ENCODE measurements at regions of chr2 and their contacts with region 1.

Region 1: DNA sequence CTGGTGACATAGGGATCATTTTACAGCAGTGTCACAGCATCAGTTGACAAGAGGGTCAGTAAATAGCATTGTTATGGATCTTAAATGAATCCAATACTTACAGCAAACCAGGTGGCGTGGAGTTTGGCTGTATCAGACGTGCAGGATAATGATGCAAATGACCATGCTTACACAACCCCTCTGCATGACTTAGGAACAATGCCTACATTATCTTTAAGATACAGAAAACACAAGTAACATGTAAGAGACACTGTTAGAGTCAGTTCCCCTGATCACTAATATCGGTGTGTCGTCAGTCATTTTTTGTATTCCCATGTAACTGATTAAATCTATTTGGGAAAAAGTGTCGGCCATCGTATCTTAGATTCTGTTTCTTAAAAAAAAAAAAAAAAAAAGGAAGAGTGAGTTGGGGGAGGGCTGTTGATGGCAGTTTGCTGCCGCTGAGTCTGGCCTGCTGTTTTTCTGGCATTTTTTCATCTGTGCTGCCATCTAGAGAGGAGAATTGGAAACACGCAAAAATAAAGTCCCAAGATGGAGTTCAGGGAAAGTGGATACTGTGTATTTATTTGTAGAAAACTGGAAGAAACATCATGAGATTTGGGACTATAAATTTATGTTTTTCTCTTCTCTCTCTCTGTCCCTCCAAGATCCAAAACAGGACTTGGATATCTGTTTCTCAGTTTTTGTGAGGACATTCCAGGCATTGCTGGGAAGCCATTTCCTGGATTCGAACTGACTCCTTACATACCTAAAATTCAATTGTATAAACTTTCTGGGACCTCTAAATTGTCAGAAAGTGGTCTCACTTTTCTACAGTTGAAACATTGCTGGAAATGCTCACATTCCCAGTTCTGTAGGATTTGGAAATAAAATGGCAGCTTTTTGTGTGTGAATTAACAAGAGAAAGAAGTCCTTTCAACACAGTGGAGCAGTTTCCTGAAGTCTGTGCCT is 60.3 kb upstream of the AGPS start:
- DNase-seq: peak; percentile 47
- H3K4me3 ChIP-seq: no peak overlapping the region
- H3K27ac ChIP-seq: no peak overlapping the region
- H3K4me1 ChIP-seq: no peaks in the 10 kb centered on the region
- H3K27me3 ChIP-seq: no peaks in the 10 kb centered on the region
- CTCF ChIP-seq: peak; percentile 30 to 76 (median 66)
- POLR2A ChIP-seq: no peak

Region 2: DNA sequence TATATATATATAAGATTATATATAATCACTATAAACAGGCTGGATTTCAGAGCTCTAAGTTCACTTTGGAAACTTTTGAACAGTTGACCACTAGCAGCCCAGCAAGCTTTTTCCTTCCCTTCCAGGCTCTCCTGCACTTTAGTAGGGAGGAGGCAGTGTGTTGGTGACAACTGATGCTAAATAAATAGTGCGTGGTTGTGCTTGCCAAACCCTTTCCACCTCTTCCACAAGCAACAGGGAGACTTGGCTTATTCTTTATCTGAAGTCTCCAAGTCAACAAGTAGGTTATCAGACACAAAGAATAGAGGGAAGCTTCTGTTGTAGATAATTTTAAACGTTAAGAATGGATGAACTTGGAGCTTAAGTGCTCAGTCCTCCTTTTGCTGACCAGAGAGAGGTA is 527.9 kb before region 1 on chr2:
- intact Hi-C with region 1: no loop called
- DNase-seq: no peak
- H3K4me3 ChIP-seq: no peak overlapping the region
- H3K27ac ChIP-seq: no peak overlapping the region
- H3K4me1 ChIP-seq: no peaks in the 10 kb centered on the region
- H3K27me3 ChIP-seq: no peaks in the 10 kb centered on the region
- CTCF ChIP-seq: no peak
- POLR2A ChIP-seq: no peak

Region 3: DNA sequence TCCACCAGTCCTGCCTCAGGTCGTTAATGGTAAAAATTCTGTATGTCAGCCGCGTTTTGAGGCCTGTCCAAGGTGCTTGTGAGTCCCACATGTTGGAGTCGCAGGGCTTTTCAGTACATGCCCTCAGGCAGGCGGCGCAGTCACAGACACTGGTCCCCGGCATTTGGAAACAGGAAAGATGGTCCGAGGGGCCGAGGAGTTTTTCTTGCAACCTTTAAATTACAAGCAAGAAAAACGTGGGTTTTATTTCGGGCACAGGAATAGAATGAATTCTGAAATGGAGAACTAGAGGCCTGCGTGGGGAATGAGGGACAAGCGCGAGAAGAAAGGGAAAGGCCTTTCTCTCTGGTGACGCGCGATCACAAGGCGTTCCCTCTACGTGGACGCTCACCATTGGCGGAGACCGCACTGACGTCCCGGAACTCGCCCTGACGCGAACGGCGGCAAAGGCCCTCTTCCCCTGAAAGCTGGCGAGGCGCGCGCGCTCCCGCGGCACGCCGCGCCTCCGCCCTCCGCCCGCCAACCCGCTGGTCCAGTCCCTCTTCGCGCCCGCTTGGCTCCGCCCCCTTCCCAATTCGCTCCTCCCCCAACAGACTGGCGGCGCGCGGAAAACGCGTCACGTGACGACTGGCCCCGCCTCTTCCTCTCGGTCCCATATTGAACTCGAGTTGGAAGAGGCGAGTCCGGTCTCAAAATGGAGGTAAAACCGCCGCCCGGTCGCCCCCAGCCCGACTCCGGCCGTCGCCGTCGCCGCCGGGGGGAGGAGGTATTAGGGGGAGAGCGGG is 120.0 kb before region 1 on chr2 and contains the start of gene HNRNPA3:
- intact Hi-C with region 1: loop called (anchors 5 kb)
- DNase-seq: peak; percentile 99
- H3K4me3 ChIP-seq: peak within 1 kb of the TSS; percentile 78 to 85
- H3K27ac ChIP-seq: peak within 1 kb of the TSS; percentile 99
- H3K4me1 ChIP-seq: peaks cover 9% of the 10 kb centered on the region
- H3K27me3 ChIP-seq: no peaks in the 10 kb centered on the region
- CTCF ChIP-seq: peak in 3 of 4 experiments; percentile 27 to 44 (median 32)
- POLR2A ChIP-seq: peak; percentile 91
- total RNA-seq, gene HNRNPA3: 56.5 to 57.0 TPM

Region 4: DNA sequence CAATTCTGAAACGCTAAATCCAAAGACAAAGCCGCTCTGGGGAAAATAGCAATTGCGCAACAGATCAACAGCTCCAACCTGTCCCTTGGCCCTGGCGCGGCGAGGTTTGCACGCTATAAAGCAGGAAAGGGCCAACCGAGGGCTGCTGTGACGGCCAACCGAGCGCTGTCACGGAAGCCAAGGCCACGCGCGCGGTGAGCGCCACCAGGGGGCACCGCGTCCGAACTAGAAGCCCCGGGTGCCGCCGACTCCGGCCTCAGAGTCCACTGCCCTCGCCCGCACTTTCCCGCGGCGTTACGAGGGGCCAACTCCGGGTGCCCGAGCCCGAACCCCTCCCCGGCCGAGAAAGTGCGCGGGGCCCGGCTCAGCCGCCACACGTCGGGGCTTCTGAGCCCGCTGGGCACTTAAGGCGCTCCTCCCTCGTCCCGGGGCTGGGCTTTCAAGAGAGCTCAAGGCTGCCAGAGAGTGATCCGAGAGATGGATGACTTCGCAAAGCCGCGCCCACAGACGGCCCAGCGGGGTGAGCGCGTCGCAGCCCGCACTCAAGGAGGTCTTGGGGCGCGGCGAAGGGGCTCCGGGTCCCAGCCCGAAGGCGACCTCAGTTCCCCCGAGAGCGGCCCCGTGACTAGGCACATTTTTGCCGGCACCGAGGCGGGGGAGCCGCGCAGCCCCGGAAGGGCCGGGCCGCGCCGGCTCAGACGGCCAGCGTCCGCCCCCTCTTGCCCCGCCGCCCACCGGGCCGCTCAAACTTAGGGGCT is 68.7 kb before region 1 on chr2:
- intact Hi-C with region 1: loop called (anchors 2 kb)
- DNase-seq: peak; percentile 98
- H3K4me3 ChIP-seq: peak overlapping the region; percentile 95 to 99
- H3K27ac ChIP-seq: peak overlapping the region; percentile 99 to 100
- H3K4me1 ChIP-seq: no peaks in the 10 kb centered on the region
- H3K27me3 ChIP-seq: no peaks in the 10 kb centered on the region
- CTCF ChIP-seq: peak; percentile 64 to 96 (median 91)
- POLR2A ChIP-seq: peak; percentile 65

Region 5: GRCh38 chr2:177413703-177414102 is 81.4 kb after region 1 on chr2:
- intact Hi-C with region 1: loop called (anchors 5 kb)
- DNase-seq: no peak
- H3K4me3 ChIP-seq: no peak overlapping the region
- H3K27ac ChIP-seq: no peak overlapping the region
- H3K4me1 ChIP-seq: no peaks in the 10 kb centered on the region
- H3K27me3 ChIP-seq: no peaks in the 10 kb centered on the region
- CTCF ChIP-seq: no peak
- POLR2A ChIP-seq: no peak

Region 6: GRCh38 chr2:177604271-177605065 is 272.2 kb after region 1 on chr2:
- intact Hi-C with region 1: loop called (anchors 10 kb)
- DNase-seq: no peak
- H3K4me3 ChIP-seq: no peak overlapping the region
- H3K27ac ChIP-seq: no peak overlapping the region
- H3K4me1 ChIP-seq: no peaks in the 10 kb centered on the region
- H3K27me3 ChIP-seq: no peaks in the 10 kb centered on the region
- CTCF ChIP-seq: peak; percentile 15 to 57 (median 36)
- POLR2A ChIP-seq: no peak

Region 7: GRCh38 chr2:177724398-177725287 is 392.3 kb after region 1 on chr2:
- intact Hi-C with region 1: loop called (anchors 2 kb)
- DNase-seq: peak; percentile 9
- H3K4me3 ChIP-seq: no peak overlapping the region
- H3K27ac ChIP-seq: no peak overlapping the region
- H3K4me1 ChIP-seq: peaks cover 13% of the 10 kb centered on the region
- H3K27me3 ChIP-seq: no peaks in the 10 kb centered on the region
- CTCF ChIP-seq: peak; percentile 30 to 78 (median 70)
- POLR2A ChIP-seq: no peak

Region 8: GRCh38 chr2:177758591-177759371 is 426.5 kb after region 1 on chr2:
- intact Hi-C with region 1: loop called (anchors 5 kb)
- DNase-seq: no peak
- H3K4me3 ChIP-seq: no peak overlapping the region
- H3K27ac ChIP-seq: no peak overlapping the region
- H3K4me1 ChIP-seq: no peaks in the 10 kb centered on the region
- H3K27me3 ChIP-seq: no peaks in the 10 kb centered on the region
- CTCF ChIP-seq: peak in 3 of 4 experiments; percentile 13 to 63 (median 37)
- POLR2A ChIP-seq: no peak

Measured in prostate gland (tissue), 2 donors.